Sciatic nerve (tissue), 2 donors: ENCODE measurements at regions of chr14 and their contacts with region 1.

Region 1: GRCh38 chr14:28751467-28752058 is 15.0 kb upstream of the FOXG1 start:
- DNase-seq: no peak
- ATAC-seq: no peak

Region 2: GRCh38 chr14:30214461-30215090 is 1463.0 kb after region 1 on chr14:
- intact Hi-C with region 1: loop called (anchors 10 kb)
- DNase-seq: no peak
- ATAC-seq: peak; percentile 81